Left ventricle myocardium superior (tissue), 1 donor: ENCODE measurements at regions of chr4 and their contacts with region 1.

Region 1: GRCh38 chr4:123661080-123661737 is 264.6 kb downstream of the SPRY1 start:
- DNase-seq: no peak
- ATAC-seq: no peak

Region 2: GRCh38 chr4:123564758-123565346 is 96.4 kb before region 1 on chr4:
- intact Hi-C with region 1: loop called (anchors 10 kb)
- DNase-seq: no peak
- ATAC-seq: peak; percentile 93

Region 3: GRCh38 chr4:123588631-123589241 is 72.5 kb before region 1 on chr4:
- intact Hi-C with region 1: no loop called
- DNase-seq: no peak
- ATAC-seq: peak; percentile 92

Region 4: GRCh38 chr4:124343661-124344171 is 682.5 kb after region 1 on chr4:
- intact Hi-C with region 1: no loop called
- DNase-seq: no peak
- ATAC-seq: no peak